ENCODE measurements at regions of chr3 and their contacts with region 1.

Region 1: DNA sequence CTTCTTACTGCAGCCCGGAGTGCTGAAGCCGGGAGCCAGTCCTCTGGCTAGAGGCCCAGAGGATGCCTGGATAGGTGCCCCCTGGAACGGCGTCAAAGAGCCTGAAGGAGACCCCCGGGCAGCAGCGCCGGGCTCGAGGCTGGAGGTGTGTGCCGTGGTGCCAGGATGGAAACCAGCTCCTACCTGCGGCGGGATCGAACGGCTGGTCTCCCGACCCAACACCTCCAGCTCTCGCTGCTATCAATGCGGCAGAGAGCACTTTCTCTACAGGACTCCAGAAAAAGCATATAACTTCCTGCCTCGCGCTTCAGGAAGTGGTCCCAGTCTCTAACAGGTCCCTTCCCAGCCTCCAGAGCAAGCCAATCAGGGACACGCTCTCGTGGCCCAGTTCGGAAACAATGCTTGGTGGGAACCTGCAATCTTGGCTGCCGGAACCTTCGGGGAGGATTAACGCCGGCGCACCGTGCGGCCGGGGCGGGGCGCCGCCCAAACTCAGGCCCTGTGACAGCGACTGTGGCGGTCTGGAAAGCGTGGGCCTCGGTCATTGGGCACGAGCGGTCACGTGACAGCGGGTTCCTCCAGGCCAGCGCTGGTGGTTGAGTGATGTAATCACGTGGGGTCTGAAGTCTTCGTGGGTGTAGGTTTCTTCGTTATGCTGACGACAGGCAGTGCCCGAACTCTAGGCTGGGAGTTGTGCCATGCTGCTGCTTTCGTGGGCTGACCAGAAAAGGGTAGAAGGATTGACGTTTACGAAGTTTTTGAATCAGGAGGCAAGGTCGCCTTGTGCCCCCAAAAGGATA is at the start of gene SLC33A1:
- DNase-seq: peak; percentile 95 to 99 (median 98)
- ATAC-seq: peak; percentile 96
- H3K4me3 ChIP-seq: peak within 1 kb of the TSS; percentile 85
- H3K4me3 Mint-ChIP-seq: peak within 1 kb of the TSS; percentile 86 to 99 (median 95)
- H3K27ac ChIP-seq: peak within 1 kb of the TSS; percentile 90
- H3K27ac Mint-ChIP-seq: peak within 1 kb of the TSS; percentile 97 to 100 (median 99)
- H3K4me1 ChIP-seq: peaks cover 19 to 33% of the 10 kb centered on the region in 2 donors
- H3K4me1 Mint-ChIP-seq: peaks cover 24 to 47% (median 39%) of the 10 kb centered on the region in 7 donors
- H3K27me3 ChIP-seq: no peaks in the 10 kb centered on the region
- H3K27me3 Mint-ChIP-seq: peaks cover 0 to 7% (median 0%) of the 10 kb centered on the region in 5 donors
- total RNA-seq, gene SLC33A1: 19.8 to 40.8 (median 31.9) TPM

Region 2: GRCh38 chr3:155495387-155495786 is 359.0 kb before region 1 on chr3:
- CTCF ChIA-PET with region 1: no interaction called
- POLR2A ChIA-PET with region 1: no interaction called
- intact Hi-C with region 1: no loop called
- DNase-seq: no peak
- ATAC-seq: peak; percentile 16
- H3K4me3 ChIP-seq: no peak overlapping the region
- H3K4me3 Mint-ChIP-seq: no peak overlapping the region
- H3K27ac ChIP-seq: no peak overlapping the region
- H3K27ac Mint-ChIP-seq: no peak overlapping the region
- H3K4me1 ChIP-seq: no peaks in the 10 kb centered on the region
- H3K4me1 Mint-ChIP-seq: peaks cover 0 to 12% (median 7%) of the 10 kb centered on the region in 7 donors
- H3K27me3 ChIP-seq: no peaks in the 10 kb centered on the region
- H3K27me3 Mint-ChIP-seq: no peaks in the 10 kb centered on the region

Region 3: GRCh38 chr3:155554777-155555451 is 299.4 kb before region 1 on chr3:
- CTCF ChIA-PET with region 1: no interaction called
- POLR2A ChIA-PET with region 1: no interaction called
- intact Hi-C with region 1: loop called in 1 of 2 experiments (anchors 10 kb)
- DNase-seq: peak in 4 of 9 donors; percentile 21 to 46 (median 41)
- ATAC-seq: peak; percentile 56
- H3K4me3 ChIP-seq: no peak overlapping the region
- H3K4me3 Mint-ChIP-seq: peak overlapping the region in 5 of 10 donors; percentile 11 to 63 (median 32)
- H3K27ac ChIP-seq: no peak overlapping the region
- H3K27ac Mint-ChIP-seq: peak overlapping the region in 5 of 9 donors; percentile 19 to 64 (median 50)
- H3K4me1 ChIP-seq: peaks cover 0 to 11% of the 10 kb centered on the region in 2 donors
- H3K4me1 Mint-ChIP-seq: peaks cover 0 to 31% (median 24%) of the 10 kb centered on the region in 7 donors
- H3K27me3 ChIP-seq: no peaks in the 10 kb centered on the region
- H3K27me3 Mint-ChIP-seq: no peaks in the 10 kb centered on the region

Region 4: GRCh38 chr3:155753036-155753639 is 101.2 kb before region 1 on chr3:
- CTCF ChIA-PET with region 1: interaction called, 3 read pairs
- POLR2A ChIA-PET with region 1: no interaction called
- intact Hi-C with region 1: loop called in 1 of 2 experiments (anchors 5 kb)
- DNase-seq: peak in 3 of 9 donors; percentile 4 to 20 (median 9)
- ATAC-seq: peak; percentile 40
- H3K4me3 ChIP-seq: no peak overlapping the region
- H3K4me3 Mint-ChIP-seq: no peak overlapping the region
- H3K27ac ChIP-seq: no peak overlapping the region
- H3K27ac Mint-ChIP-seq: peak overlapping the region in 1 of 9 donors; percentile 18
- H3K4me1 ChIP-seq: no peaks in the 10 kb centered on the region
- H3K4me1 Mint-ChIP-seq: no peaks in the 10 kb centered on the region
- H3K27me3 ChIP-seq: no peaks in the 10 kb centered on the region
- H3K27me3 Mint-ChIP-seq: peaks cover 0 to 7% (median 0%) of the 10 kb centered on the region in 5 donors

Region 5: DNA sequence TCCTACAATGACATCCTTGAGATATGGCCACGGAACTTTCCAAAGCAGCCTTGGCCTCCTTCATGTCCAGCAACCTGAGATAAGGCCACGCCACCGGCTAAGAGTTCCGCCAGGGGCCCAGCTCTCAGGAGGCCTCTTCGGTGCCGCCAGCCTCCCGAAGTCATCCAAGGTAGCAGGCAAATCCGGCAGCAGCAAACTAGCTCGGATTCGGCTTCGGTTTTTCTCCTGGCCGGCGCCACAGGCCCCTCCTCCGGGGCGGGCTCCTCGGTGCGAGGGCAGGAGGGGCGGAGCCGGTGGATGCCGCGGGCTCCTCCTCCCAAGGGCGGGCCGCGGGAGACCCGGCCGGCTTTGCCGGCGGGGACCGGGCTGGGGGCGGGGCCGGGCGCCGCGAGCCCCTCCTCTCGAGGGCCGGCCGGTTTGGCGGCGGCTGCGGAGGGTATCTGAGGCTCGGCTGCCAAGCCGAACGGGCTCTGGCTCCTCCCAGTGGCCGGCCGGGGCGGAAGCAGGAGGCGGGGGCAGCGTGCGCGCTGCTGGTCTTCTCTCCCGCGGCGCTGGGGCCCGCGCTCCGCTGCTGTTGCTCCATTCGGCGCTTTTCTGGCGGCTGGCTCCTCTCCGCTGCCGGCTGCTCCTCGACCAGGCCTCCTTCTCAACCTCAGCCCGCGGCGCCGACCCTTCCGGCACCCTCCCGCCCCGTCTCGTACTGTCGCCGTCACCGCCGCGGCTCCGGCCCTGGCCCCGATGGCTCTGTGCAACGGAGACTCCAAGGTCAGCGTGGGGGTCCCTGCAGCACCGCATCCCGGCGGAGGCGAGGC is 16.0 kb after region 1 on chr3 and contains the start of gene GMPS:
- CTCF ChIA-PET with region 1: interaction called, 4 read pairs
- POLR2A ChIA-PET with region 1: interaction called, 34 read pairs
- intact Hi-C with region 1: loop called (anchors 1 kb)
- DNase-seq: peak; percentile 87 to 98 (median 96)
- ATAC-seq: peak; percentile 97
- H3K4me3 ChIP-seq: peak within 1 kb of the TSS; percentile 90
- H3K4me3 Mint-ChIP-seq: peak within 1 kb of the TSS; percentile 92 to 100 (median 98)
- H3K27ac ChIP-seq: peak within 1 kb of the TSS; percentile 94
- H3K27ac Mint-ChIP-seq: peak within 1 kb of the TSS; percentile 89 to 97 (median 96)
- H3K4me1 ChIP-seq: peaks cover 8% of the 10 kb centered on the region in 2 donors
- H3K4me1 Mint-ChIP-seq: peaks cover 17 to 35% (median 26%) of the 10 kb centered on the region in 7 donors
- H3K27me3 ChIP-seq: no peaks in the 10 kb centered on the region
- H3K27me3 Mint-ChIP-seq: no peaks in the 10 kb centered on the region
- total RNA-seq, gene GMPS: 36.3 to 85.1 (median 45.4) TPM

Region 6: GRCh38 chr3:156071031-156071430 is 216.7 kb after region 1 on chr3:
- CTCF ChIA-PET with region 1: no interaction called
- POLR2A ChIA-PET with region 1: no interaction called
- intact Hi-C with region 1: no loop called
- DNase-seq: no peak
- ATAC-seq: no peak
- H3K4me3 ChIP-seq: no peak overlapping the region
- H3K4me3 Mint-ChIP-seq: no peak overlapping the region
- H3K27ac ChIP-seq: no peak overlapping the region
- H3K27ac Mint-ChIP-seq: no peak overlapping the region
- H3K4me1 ChIP-seq: no peaks in the 10 kb centered on the region
- H3K4me1 Mint-ChIP-seq: no peaks in the 10 kb centered on the region
- H3K27me3 ChIP-seq: no peaks in the 10 kb centered on the region
- H3K27me3 Mint-ChIP-seq: peaks cover 10 to 30% (median 20%) of the 10 kb centered on the region in 5 donors

Region 7: DNA sequence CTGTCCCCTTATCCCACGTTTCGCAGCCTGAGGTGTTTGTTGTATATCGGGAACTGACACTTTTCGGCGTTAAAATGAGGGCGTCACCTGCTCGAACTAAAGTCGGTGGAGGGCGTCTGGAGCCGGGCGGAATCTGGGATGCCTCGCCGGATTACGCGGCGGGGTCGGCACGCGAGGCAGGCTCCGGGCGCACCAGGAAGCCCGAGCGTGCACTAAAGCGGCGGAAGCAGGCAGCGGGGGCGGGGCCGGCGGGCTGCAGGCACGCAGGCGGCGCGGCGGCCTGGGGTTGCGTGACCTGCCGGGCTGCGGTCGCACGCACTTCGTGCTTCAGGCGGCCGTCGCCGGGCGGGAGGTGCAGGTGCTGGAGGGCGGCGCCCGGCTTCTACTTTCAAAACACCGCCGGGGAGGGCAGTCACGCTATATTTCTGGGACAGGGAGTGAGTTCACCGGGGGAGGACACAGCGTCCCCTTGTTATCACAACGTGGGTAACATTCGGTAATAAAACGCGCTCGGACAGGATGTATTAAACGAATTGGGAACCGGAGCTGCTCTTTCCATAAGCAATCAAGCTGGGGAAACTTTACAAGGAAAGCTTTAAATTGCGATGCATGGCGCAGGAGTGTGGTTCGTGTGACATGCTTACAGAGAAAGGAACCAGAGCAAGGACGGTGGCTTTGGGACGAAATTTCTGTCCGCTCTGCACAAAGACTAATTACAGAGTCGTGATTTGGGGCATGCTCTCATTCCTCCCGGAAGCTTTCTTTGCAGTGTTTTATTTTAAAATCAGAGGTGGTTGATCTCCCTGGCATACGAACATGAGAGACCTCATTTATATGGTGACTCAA is 962.7 kb after region 1 on chr3:
- CTCF ChIA-PET with region 1: no interaction called
- POLR2A ChIA-PET with region 1: no interaction called
- intact Hi-C with region 1: loop called (anchors 5 to 10 kb)
- DNase-seq: peak; percentile 68 to 90 (median 81)
- ATAC-seq: peak; percentile 89
- H3K4me3 ChIP-seq: peak overlapping the region; percentile 64
- H3K4me3 Mint-ChIP-seq: peak overlapping the region; percentile 87 to 97 (median 95)
- H3K27ac ChIP-seq: peak overlapping the region; percentile 67
- H3K27ac Mint-ChIP-seq: peak overlapping the region; percentile 90 to 99 (median 96)
- H3K4me1 ChIP-seq: peaks cover 8 to 10% of the 10 kb centered on the region in 2 donors
- H3K4me1 Mint-ChIP-seq: peaks cover 6 to 72% (median 29%) of the 10 kb centered on the region in 7 donors
- H3K27me3 ChIP-seq: no peaks in the 10 kb centered on the region
- H3K27me3 Mint-ChIP-seq: no peaks in the 10 kb centered on the region

Region 8: GRCh38 chr3:157159762-157160657 is 1305.7 kb after region 1 on chr3 and contains the start of gene CCNL1:
- CTCF ChIA-PET with region 1: no interaction called
- POLR2A ChIA-PET with region 1: interaction called, 10 read pairs
- intact Hi-C with region 1: loop called (anchors 1 kb)
- DNase-seq: peak; percentile 94 to 98 (median 97)
- ATAC-seq: peak; percentile 88
- H3K4me3 ChIP-seq: peak within 1 kb of the TSS; percentile 92
- H3K4me3 Mint-ChIP-seq: peak within 1 kb of the TSS; percentile 91 to 100 (median 96)
- H3K27ac ChIP-seq: peak within 1 kb of the TSS; percentile 97
- H3K27ac Mint-ChIP-seq: peak within 1 kb of the TSS; percentile 96 to 100 (median 98)
- H3K4me1 ChIP-seq: peaks cover 39 to 45% of the 10 kb centered on the region in 2 donors
- H3K4me1 Mint-ChIP-seq: peaks cover 37 to 69% (median 65%) of the 10 kb centered on the region in 7 donors
- H3K27me3 ChIP-seq: no peaks in the 10 kb centered on the region
- H3K27me3 Mint-ChIP-seq: no peaks in the 10 kb centered on the region
- total RNA-seq, gene CCNL1: 230 to 1,170 (median 374) TPM

Measured in naive thymus-derived CD4-positive, alpha-beta T cell (primary cell).